Ascending aorta (tissue), 2 donors: ENCODE measurements at regions of chr15 and their contacts with region 1.

Region 1: GRCh38 chr15:58770857-58771620 is at the start of gene MINDY2:
- DNase-seq: peak; percentile 93 to 99
- H3K4me3 ChIP-seq: peak within 1 kb of the TSS; percentile 70 to 96
- H3K27ac ChIP-seq: peak within 1 kb of the TSS; percentile 92 to 99
- H3K4me1 ChIP-seq: peaks cover 3 to 25% of the 10 kb centered on the region in 2 donors
- H3K27me3 ChIP-seq: no peaks in the 10 kb centered on the region
- CTCF ChIP-seq: peak in 2 of 3 experiments; percentile 29 to 31
- total RNA-seq, gene MINDY2: 10.4 TPM

Region 2: GRCh38 chr15:58227706-58228543 is 543.1 kb before region 1 on chr15:
- intact Hi-C with region 1: loop called (anchors 5 kb)
- DNase-seq: peak in 1 of 2 donors; percentile 83
- H3K4me3 ChIP-seq: no peak overlapping the region
- H3K27ac ChIP-seq: peak overlapping the region in 1 of 2 donors; percentile 38
- H3K4me1 ChIP-seq: peaks cover 0 to 12% of the 10 kb centered on the region in 2 donors
- H3K27me3 ChIP-seq: no peaks in the 10 kb centered on the region
- CTCF ChIP-seq: peak; percentile 67 to 80 (median 78)